Mammary epithelial cell (primary cell): ENCODE measurements at regions of chr6 and their contacts with region 1.

Region 1: GRCh38 chr6:77136086-77136485 is 327.2 kb downstream of the HTR1B start:
- DNase-seq: peak; percentile 74
- H3K4me3 ChIP-seq: no peak overlapping the region
- H3K27ac ChIP-seq: peak overlapping the region; percentile 29
- H3K4me1 ChIP-seq: peaks cover 14% of the 10 kb centered on the region
- H3K27me3 ChIP-seq: no peaks in the 10 kb centered on the region
- CTCF ChIP-seq: no peak

Region 2: GRCh38 chr6:76742919-76743318 is 393.2 kb before region 1 on chr6:
- CTCF ChIA-PET with region 1: no interaction called
- dilution Hi-C with region 1: no loop called
- in situ Hi-C with region 1: no loop called
- intact Hi-C with region 1: loop called (anchors 5 kb)
- DNase-seq: peak; percentile 6
- H3K4me3 ChIP-seq: no peak overlapping the region
- H3K27ac ChIP-seq: no peak overlapping the region
- H3K4me1 ChIP-seq: no peaks in the 10 kb centered on the region
- H3K27me3 ChIP-seq: no peaks in the 10 kb centered on the region
- CTCF ChIP-seq: no peak

Region 3: GRCh38 chr6:76843054-76843822 is 292.8 kb before region 1 on chr6:
- CTCF ChIA-PET with region 1: no interaction called
- dilution Hi-C with region 1: no loop called
- in situ Hi-C with region 1: no loop called
- intact Hi-C with region 1: no loop called
- DNase-seq: no peak
- H3K4me3 ChIP-seq: no peak overlapping the region
- H3K27ac ChIP-seq: no peak overlapping the region
- H3K4me1 ChIP-seq: no peaks in the 10 kb centered on the region
- H3K27me3 ChIP-seq: no peaks in the 10 kb centered on the region
- CTCF ChIP-seq: no peak

Region 4: GRCh38 chr6:77055711-77056110 is 80.4 kb before region 1 on chr6:
- CTCF ChIA-PET with region 1: no interaction called
- dilution Hi-C with region 1: no loop called
- in situ Hi-C with region 1: no loop called
- intact Hi-C with region 1: no loop called
- DNase-seq: no peak
- H3K4me3 ChIP-seq: no peak overlapping the region
- H3K27ac ChIP-seq: no peak overlapping the region
- H3K4me1 ChIP-seq: no peaks in the 10 kb centered on the region
- H3K27me3 ChIP-seq: no peaks in the 10 kb centered on the region
- CTCF ChIP-seq: no peak